ENCODE measurements at regions of chr16 and their contacts with region 1.

Region 1: GRCh38 chr16:25014500-25015147 is 545 bp downstream of the ARHGAP17 start:
- DNase-seq: peak; percentile 29
- ATAC-seq: peak; percentile 25
- H3K4me3 Mint-ChIP-seq: peak overlapping the region; percentile 91
- H3K27ac Mint-ChIP-seq: peak overlapping the region; percentile 91
- H3K4me1 Mint-ChIP-seq: peaks cover 73% of the 10 kb centered on the region
- H3K27me3 Mint-ChIP-seq: no peaks in the 10 kb centered on the region
- CTCF ChIP-seq: no peak

Region 2: DNA sequence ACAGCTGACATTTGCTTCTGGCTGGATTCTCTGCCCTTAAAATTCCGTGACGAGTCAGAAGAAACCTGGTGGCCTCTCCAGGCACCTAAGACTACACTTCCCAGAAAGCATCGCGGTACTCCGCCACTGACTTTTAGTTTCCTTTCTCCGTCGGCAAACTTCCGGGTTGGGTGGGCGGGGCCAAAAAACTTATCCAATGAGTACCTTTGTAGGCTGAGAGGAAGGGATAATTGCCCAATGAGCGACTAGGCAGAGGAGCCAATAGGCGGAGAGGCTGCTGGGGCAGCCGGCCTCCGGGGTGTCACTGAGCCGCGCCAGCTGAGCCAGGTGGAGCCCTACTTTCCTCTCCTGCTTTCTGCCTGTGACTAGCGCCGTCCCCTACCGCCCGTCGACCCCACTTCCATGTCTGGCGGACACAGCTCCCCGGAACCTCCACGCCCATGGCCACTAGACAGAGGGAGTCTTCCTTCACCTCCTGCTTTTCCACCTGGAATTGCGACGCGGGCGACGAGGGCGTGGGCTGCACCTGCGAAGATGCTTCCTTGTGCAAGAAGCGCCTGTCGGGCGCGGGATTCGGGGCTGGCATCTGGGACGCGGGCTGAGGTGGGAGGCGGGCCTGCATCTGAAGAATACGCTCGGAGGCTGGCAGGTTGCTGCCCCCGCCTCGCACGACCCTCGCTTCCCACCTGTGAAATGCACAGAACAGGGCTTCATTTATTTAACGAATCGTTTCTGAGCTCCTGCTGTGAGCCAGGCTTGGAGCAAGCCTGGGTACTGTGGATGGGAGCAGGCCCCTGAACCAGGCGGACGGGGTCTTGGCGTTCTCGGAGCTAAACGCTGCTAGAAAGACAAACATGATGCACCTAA is 17.1 kb after region 1 on chr16:
- CTCF ChIA-PET with region 1: interaction called, 5 read pairs
- POLR2A ChIA-PET with region 1: interaction called, 31 read pairs
- intact Hi-C with region 1: no loop called
- DNase-seq: peak; percentile 93
- ATAC-seq: peak; percentile 98
- H3K4me3 Mint-ChIP-seq: peak overlapping the region; percentile 76
- H3K27ac Mint-ChIP-seq: peak overlapping the region; percentile 97
- H3K4me1 Mint-ChIP-seq: peaks cover 41% of the 10 kb centered on the region
- H3K27me3 Mint-ChIP-seq: no peaks in the 10 kb centered on the region
- CTCF ChIP-seq: no peak

Measured in activated CD8-positive, alpha-beta T cell treated with anti-CD3 and anti-CD28 coated beads for 36 hours (primary cell).